Activated CD4-positive, alpha-beta T cell treated with anti-CD3 and anti-CD28 coated beads for 36 hours (primary cell): ENCODE measurements at regions of chr14 and their contacts with region 1.

Region 1: GRCh38 chr14:58166005-58166983 is 14.3 kb upstream of the ARMH4 start:
- DNase-seq: peak; percentile 89
- ATAC-seq: peak; percentile 73
- H3K4me3 Mint-ChIP-seq: no peak overlapping the region
- H3K27ac Mint-ChIP-seq: no peak overlapping the region
- H3K4me1 Mint-ChIP-seq: peaks cover 9% of the 10 kb centered on the region
- H3K27me3 Mint-ChIP-seq: peaks cover 5% of the 10 kb centered on the region

Region 2: DNA sequence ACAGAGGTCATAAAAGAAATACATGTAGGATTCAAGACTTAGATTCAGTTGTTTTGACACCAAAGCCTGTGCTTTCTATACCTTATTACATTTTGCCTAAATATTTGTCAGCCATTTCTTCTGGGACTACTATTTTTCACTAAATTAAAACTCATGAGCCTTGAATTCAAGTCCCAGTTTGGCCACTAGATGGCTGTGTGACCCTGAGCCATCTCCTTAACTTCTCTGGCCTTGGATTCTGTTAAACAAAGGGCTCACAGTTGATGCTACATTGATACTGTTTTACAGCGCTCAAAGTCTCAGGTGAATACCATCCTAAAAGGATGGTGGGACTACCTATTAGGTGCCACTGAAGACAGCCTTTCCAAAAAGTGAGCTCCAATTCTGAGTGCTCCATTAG is 633.1 kb before region 1 on chr14:
- CTCF ChIA-PET with region 1: no interaction called
- POLR2A ChIA-PET with region 1: no interaction called
- intact Hi-C with region 1: loop called in 1 of 2 experiments (anchors 10 kb)
- DNase-seq: peak; percentile 35
- ATAC-seq: no peak
- H3K4me3 Mint-ChIP-seq: no peak overlapping the region
- H3K27ac Mint-ChIP-seq: no peak overlapping the region
- H3K4me1 Mint-ChIP-seq: no peaks in the 10 kb centered on the region
- H3K27me3 Mint-ChIP-seq: peaks cover 8% of the 10 kb centered on the region

Region 3: DNA sequence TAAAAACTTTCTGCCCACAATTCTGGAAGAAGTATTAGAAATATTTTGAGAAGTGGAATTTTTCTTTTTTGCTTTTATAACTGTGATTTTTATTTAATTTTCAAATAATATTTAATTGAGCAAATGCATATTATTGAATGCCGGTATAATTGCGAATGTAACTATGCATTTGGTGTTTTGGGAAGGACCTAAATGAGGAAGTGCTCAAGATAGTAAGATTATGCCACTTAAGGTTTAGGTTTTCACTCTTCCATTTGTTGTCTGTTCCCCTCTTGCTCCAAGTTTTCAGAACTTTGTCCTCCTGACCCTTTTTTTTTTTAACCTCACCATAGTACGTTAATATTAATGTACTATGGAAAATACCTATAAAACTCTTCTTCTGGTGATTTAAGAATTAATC is 347.0 kb after region 1 on chr14:
- CTCF ChIA-PET with region 1: no interaction called
- POLR2A ChIA-PET with region 1: no interaction called
- intact Hi-C with region 1: no loop called
- DNase-seq: no peak
- ATAC-seq: no peak
- H3K4me3 Mint-ChIP-seq: no peak overlapping the region
- H3K27ac Mint-ChIP-seq: no peak overlapping the region
- H3K4me1 Mint-ChIP-seq: no peaks in the 10 kb centered on the region
- H3K27me3 Mint-ChIP-seq: no peaks in the 10 kb centered on the region